GM23248 (cell line): ENCODE measurements at regions of chr5 and their contacts with region 1.

Region 1: GRCh38 chr5:1570975-1571374 is 47.2 kb upstream of the LPCAT1 start:
- DNase-seq: no peak
- H3K4me3 ChIP-seq: no peak overlapping the region
- H3K27ac ChIP-seq: no peak overlapping the region
- H3K4me1 ChIP-seq: peaks cover 10% of the 10 kb centered on the region
- H3K27me3 ChIP-seq: no peaks in the 10 kb centered on the region

Region 2: DNA sequence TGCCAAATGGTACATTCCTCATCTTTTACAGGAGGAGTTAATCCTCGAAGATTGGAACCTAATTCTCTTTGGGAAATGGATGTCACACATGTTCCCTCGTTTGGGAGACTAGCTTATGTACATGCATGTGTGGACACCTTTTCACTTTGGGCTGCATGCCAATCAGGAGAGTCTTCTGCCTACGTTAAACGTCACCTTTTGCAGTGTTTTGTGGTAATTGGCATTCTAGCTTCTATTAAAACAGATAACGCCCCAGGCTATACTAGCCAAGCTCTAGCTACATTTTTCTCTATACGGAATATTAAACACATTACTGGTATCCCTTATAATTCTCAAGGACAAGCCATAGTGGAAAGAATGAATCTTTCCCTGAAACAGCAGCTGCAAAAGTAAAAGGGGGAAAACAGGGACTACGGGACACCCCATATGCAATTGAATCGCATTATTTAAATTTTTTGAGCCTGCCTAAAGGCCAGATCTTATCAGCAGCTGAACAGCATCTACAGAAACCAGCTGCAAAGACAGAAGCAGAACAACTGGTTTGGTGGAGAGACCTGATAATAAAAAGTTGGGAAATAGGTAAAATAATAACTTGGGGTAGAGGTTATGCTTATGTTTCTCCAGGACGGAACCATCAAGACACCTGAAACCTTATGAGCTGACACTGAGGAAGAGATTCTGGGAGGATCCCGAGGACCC is 1323.3 kb before region 1 on chr5:
- in situ Hi-C with region 1: loop called (anchors 5 kb)
- DNase-seq: no peak
- H3K4me3 ChIP-seq: no peak overlapping the region
- H3K27ac ChIP-seq: no peak overlapping the region
- H3K4me1 ChIP-seq: no peaks in the 10 kb centered on the region
- H3K27me3 ChIP-seq: no peaks in the 10 kb centered on the region

Region 3: GRCh38 chr5:2087980-2088379 is 517.0 kb after region 1 on chr5:
- in situ Hi-C with region 1: no loop called
- DNase-seq: no peak
- H3K4me3 ChIP-seq: no peak overlapping the region
- H3K27ac ChIP-seq: no peak overlapping the region
- H3K4me1 ChIP-seq: no peaks in the 10 kb centered on the region
- H3K27me3 ChIP-seq: no peaks in the 10 kb centered on the region